ENCODE measurements at regions of chr9 and their contacts with region 1.

Region 1: DNA sequence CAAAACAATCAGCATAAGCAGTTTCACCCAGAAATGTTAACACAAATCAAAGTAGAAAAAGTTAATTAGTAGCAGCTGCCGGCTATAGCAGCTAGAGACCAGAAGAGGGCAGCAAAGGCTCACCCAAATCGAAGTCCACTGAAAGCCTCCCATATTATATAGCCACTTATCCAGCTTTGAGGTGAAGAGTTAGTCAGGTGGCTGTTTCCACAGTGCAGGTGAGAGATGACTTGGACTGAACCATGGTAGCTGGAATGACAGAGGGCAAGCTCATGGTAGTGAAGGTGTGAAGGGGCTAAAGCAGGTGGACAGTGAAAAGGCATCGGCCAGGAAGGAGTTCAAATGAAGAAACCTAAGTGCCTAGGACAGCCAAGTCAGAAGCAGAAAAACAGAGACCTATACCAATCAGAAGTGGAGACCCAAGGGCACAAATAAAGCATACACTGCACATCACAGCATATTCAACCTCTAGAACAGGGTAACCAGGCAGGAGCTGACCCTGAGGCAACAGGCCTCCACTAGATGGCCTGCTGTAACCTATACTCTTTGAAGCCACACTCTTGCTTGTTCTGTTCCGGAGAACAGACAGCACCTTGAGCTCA is 7.2 kb upstream of the RNF38 start:
- DNase-seq: peak; percentile 74
- ATAC-seq: peak; percentile 89
- H3K4me3 Mint-ChIP-seq: no peak overlapping the region
- H3K27ac Mint-ChIP-seq: peak overlapping the region; percentile 38
- H3K4me1 Mint-ChIP-seq: peaks cover 14% of the 10 kb centered on the region
- H3K27me3 Mint-ChIP-seq: no peaks in the 10 kb centered on the region

Region 2: DNA sequence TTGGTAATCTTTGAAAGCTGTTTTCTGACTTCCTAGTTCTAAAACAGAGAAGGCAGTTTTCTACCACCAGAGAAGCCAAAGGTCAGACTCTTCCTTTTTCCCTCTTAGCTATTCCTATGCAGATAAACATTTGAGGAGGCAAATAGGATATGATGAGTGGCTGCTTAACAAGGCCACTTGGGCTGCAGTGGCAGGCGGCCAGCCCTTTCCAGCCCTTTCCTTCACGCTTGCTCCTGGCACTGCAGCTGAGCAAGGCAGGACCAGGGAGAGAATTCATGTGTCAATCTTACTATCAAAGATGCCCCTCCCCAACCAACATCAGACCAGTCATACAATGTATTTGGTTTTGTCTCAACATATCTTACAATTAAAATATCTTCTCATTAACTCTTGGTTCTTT is 29.7 kb after region 1 on chr9:
- CTCF ChIA-PET with region 1: interaction called, 19 read pairs
- POLR2A ChIA-PET with region 1: no interaction called
- intact Hi-C with region 1: no loop called
- DNase-seq: no peak
- ATAC-seq: no peak
- H3K4me3 Mint-ChIP-seq: no peak overlapping the region
- H3K27ac Mint-ChIP-seq: no peak overlapping the region
- H3K4me1 Mint-ChIP-seq: peaks cover 13% of the 10 kb centered on the region
- H3K27me3 Mint-ChIP-seq: no peaks in the 10 kb centered on the region

Region 3: DNA sequence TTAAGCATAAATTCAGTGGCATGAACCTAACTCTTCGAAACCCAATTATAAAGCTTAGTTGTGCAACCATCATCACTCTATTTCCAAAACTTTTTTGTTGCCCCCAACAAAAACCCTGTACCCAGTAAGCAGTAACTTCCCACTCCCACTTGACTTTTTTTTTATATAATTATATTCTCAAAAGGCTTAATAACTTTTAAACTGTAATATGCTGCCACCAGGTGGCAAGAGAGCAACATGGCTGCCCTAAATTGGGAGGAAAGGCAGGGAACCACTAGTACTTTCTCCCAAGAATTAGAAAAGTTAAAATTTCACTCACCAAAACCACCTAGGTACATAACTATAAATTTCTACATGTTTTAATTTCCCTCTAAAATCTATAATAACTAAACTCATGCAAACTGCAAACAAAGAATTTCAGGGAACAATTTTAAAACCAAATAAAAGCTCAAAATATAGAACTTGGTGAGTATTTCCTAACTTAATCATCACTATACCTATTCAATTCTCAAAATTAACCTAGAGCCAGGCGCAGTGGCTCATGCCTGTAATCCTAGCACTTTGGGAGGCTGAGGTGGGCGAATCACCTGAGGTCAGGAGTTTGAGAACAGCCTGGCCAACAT is 43.0 kb after region 1 on chr9:
- CTCF ChIA-PET with region 1: interaction called, 27 read pairs
- POLR2A ChIA-PET with region 1: no interaction called
- intact Hi-C with region 1: loop called (anchors 1 kb)
- DNase-seq: peak; percentile 30
- ATAC-seq: no peak
- H3K4me3 Mint-ChIP-seq: no peak overlapping the region
- H3K27ac Mint-ChIP-seq: no peak overlapping the region
- H3K4me1 Mint-ChIP-seq: peaks cover 13% of the 10 kb centered on the region
- H3K27me3 Mint-ChIP-seq: no peaks in the 10 kb centered on the region

Region 4: GRCh38 chr9:36487482-36488388 is 80.5 kb after region 1 on chr9:
- CTCF ChIA-PET with region 1: interaction called, 10 read pairs
- POLR2A ChIA-PET with region 1: no interaction called
- intact Hi-C with region 1: loop called in 1 of 2 experiments (anchors 5 kb)
- DNase-seq: peak; percentile 95
- ATAC-seq: peak; percentile 93
- H3K4me3 Mint-ChIP-seq: peak overlapping the region; percentile 93
- H3K27ac Mint-ChIP-seq: peak overlapping the region; percentile 99
- H3K4me1 Mint-ChIP-seq: peaks cover 63% of the 10 kb centered on the region
- H3K27me3 Mint-ChIP-seq: no peaks in the 10 kb centered on the region

Region 5: GRCh38 chr9:36530224-36530623 is 123.0 kb after region 1 on chr9:
- CTCF ChIA-PET with region 1: interaction called, 10 read pairs
- POLR2A ChIA-PET with region 1: no interaction called
- intact Hi-C with region 1: no loop called
- DNase-seq: no peak
- ATAC-seq: no peak
- H3K4me3 Mint-ChIP-seq: no peak overlapping the region
- H3K27ac Mint-ChIP-seq: no peak overlapping the region
- H3K4me1 Mint-ChIP-seq: no peaks in the 10 kb centered on the region
- H3K27me3 Mint-ChIP-seq: no peaks in the 10 kb centered on the region

Region 6: DNA sequence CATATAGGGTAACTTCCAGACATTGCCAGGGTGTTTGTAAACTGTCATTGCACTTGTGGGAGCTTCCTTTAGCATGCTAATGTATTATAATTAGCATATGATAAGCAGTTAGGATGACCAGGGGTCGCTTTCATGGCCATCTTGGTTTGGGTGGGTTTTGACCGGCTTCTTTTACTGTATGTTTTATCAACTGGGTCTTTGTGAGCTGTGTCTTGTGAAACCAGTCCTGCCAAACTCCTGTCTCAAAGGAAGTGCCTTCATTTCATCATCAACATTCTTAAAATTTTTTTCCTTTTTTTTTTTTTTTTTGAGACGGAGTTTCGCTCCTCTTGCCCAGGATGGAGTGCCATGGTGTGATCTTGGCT is 153.6 kb after region 1 on chr9:
- CTCF ChIA-PET with region 1: interaction called, 285 read pairs
- POLR2A ChIA-PET with region 1: no interaction called
- intact Hi-C with region 1: no loop called
- DNase-seq: no peak
- ATAC-seq: no peak
- H3K4me3 Mint-ChIP-seq: no peak overlapping the region
- H3K27ac Mint-ChIP-seq: no peak overlapping the region
- H3K4me1 Mint-ChIP-seq: no peaks in the 10 kb centered on the region
- H3K27me3 Mint-ChIP-seq: no peaks in the 10 kb centered on the region

Region 7: GRCh38 chr9:36665921-36666431 is 258.8 kb after region 1 on chr9:
- CTCF ChIA-PET with region 1: no interaction called
- POLR2A ChIA-PET with region 1: no interaction called
- intact Hi-C with region 1: no loop called
- DNase-seq: no peak
- ATAC-seq: no peak
- H3K4me3 Mint-ChIP-seq: no peak overlapping the region
- H3K27ac Mint-ChIP-seq: no peak overlapping the region
- H3K4me1 Mint-ChIP-seq: peaks cover 8% of the 10 kb centered on the region
- H3K27me3 Mint-ChIP-seq: no peaks in the 10 kb centered on the region

Region 8: DNA sequence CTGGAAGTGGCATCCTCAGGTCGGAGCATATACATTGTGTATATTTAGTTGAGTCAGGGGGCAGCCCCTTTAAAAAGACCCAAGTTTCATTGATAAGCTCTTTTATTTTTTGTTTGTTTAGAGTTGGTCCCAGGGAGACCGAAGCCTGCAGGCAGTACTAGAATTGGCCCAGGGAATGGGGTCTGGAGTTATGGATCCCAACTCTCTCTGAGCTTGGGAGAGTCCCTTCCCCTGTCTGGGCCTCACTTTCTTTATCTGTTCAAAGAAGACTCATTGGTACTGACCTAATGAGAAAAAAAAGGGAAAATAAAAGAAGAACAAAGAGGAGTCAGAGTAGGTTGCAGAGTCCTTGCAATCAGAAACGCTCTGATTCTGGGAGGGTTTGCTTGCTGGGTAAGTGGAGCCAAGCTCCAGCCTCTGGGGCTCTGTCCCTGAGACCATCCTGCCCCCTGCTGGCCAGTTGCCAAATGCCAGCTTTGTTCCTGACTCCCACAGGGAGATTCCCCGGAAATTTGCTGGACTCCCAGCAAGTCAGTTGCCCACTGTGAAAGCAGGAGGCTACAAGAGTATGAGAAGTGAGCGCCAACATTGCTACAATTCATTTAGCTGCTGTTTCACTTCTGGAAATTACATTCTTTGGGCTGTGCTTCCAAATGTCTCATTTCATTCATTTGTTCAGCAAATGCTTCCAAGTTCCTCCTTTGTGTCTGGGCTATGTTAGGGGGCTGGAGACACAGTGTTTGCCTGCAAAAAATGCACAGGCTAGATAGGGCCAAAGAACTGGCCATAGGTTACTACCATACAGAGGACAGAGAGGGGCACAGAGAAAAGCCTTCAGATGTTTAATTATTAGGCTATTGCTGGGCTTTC is 321.7 kb after region 1 on chr9:
- CTCF ChIA-PET with region 1: interaction called, 22 read pairs
- POLR2A ChIA-PET with region 1: no interaction called
- intact Hi-C with region 1: loop called (anchors 1 kb)
- DNase-seq: peak; percentile 86
- ATAC-seq: peak; percentile 69
- H3K4me3 Mint-ChIP-seq: no peak overlapping the region
- H3K27ac Mint-ChIP-seq: no peak overlapping the region
- H3K4me1 Mint-ChIP-seq: no peaks in the 10 kb centered on the region
- H3K27me3 Mint-ChIP-seq: no peaks in the 10 kb centered on the region